ENCODE measurements at regions of chr1 and their contacts with region 1.

Region 1: DNA sequence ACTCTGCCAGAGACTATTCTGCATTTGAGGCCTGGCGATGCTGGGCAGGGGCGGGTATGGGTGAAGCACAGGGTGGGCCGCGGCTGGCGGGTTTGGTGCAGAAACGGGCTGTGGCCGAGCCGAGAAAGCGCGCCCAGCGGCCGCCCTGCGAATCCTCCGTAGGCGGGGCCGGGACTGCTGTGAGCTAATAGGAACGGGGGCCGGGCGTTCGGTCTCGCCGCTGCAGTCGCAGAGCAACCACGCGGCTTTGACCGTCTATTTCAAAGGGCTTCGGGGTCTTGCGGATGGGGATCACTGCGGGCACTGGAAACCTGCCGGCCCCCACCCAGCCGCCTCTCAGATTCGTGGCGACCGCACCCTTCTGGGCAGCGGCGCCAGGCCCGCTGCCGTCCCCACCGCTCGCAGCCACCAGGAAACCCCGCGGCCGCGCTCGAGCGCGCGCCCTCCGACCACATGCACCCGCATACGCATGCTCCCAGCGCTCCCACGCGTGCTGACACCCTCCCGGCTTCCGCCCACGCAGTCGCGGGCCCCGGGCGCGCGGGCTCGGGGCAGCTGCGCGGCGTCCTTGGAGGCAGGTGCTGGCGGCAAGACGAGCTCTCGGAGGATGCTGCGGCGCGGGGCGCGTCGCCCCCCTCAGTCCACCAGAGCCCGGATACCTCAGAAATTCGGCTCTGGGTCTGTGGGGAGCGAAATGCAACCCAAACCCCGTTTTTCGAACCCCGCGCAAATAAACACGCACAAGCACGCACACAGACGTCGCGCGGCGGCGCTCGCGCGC is 32.6 kb downstream of the DNTTIP2 start:
- DNase-seq: peak; percentile 87
- ATAC-seq: peak; percentile 26
- H3K4me3 Mint-ChIP-seq: peak overlapping the region; percentile 90
- H3K27ac Mint-ChIP-seq: peak overlapping the region; percentile 88
- H3K4me1 Mint-ChIP-seq: peaks cover 20% of the 10 kb centered on the region
- H3K27me3 Mint-ChIP-seq: no peaks in the 10 kb centered on the region

Region 2: GRCh38 chr1:93179886-93180722 is 666.3 kb before region 1 on chr1 and contains the start of gene TMED5:
- CTCF ChIA-PET with region 1: no interaction called
- POLR2A ChIA-PET with region 1: no interaction called
- intact Hi-C with region 1: loop called in 1 of 2 experiments (anchors 1 kb)
- DNase-seq: peak; percentile 98
- ATAC-seq: peak; percentile 85
- H3K4me3 Mint-ChIP-seq: peak within 1 kb of the TSS; percentile 89
- H3K27ac Mint-ChIP-seq: peak within 1 kb of the TSS; percentile 99
- H3K4me1 Mint-ChIP-seq: peaks cover 41% of the 10 kb centered on the region
- H3K27me3 Mint-ChIP-seq: no peaks in the 10 kb centered on the region
- total RNA-seq, gene TMED5: 32.6 to 33.0 TPM

Region 3: DNA sequence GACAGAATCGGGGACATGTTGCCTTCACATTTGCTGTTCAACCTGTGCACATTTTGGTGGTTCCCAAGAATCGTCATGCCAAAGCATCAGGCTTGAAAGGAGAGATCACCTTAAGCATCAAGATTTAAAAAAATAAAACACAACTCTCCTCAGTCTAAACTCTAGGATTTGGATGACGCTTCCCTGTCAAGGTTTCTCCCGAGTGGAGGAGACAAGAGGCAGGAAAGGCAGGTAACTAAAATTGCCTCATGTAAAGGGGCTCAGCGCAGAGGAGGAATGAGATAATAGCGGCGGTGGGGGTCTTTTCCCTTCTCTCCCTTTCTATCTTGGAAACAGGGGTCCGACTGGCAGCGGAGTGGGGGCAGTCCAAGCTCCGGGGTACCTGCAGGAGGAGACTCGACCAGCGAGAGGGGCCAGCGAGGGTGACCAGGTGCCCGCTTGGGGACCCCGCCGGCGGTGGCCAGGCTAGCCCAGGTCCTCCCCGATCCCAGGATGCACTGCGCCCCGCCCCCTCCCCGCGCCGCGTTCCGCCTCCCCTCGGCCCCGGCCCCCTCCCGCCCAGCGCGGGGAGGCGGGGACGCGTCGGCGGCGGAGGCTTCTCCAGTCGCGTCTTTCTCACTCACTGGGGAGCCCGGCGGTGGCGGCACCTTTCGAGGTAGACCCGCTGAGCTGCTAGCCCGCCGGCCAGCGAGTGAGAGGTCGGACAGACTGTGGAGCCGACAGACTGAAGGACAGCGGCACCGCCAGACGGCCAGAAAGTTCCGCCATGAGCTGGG is 398.7 kb before region 1 on chr1 and contains the start of gene FNBP1L:
- CTCF ChIA-PET with region 1: interaction called, 5 read pairs
- POLR2A ChIA-PET with region 1: no interaction called
- intact Hi-C with region 1: loop called (anchors 2 kb)
- DNase-seq: peak; percentile 81
- ATAC-seq: peak; percentile 87
- H3K4me3 Mint-ChIP-seq: peak within 1 kb of the TSS; percentile 83
- H3K27ac Mint-ChIP-seq: peak within 1 kb of the TSS; percentile 72
- H3K4me1 Mint-ChIP-seq: peaks cover 15% of the 10 kb centered on the region
- H3K27me3 Mint-ChIP-seq: peaks cover 24% of the 10 kb centered on the region
- total RNA-seq, gene FNBP1L: 1.2 to 1.4 TPM

Region 4: DNA sequence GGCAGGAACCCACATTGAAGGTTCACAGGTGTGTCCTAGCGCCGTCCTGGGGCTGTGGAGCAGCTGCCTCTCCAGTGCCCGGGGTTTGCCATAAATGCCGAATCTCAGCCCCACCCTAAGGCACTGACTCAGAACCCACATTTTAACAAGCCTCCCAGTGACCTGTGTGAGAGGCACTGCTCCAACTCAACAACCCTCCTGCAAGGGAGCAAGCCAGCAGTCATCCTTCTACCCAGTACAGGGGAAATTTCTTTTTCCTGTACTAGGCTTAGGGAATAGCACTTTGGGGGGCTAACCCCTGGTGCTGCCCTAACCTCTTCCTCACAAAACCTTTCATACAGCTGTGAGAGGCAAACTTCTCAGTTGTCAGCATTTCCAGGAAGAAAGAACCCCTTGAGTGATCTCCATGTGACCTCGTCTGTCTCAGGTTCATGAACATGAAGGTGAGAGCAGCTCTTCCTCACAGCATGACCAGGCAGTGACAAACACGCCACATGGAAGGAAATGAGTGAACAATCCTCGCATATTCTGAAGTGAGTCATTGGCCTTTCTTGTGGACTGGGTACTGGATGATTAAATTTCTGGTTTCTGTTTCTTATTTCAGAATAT is 153.3 kb before region 1 on chr1:
- CTCF ChIA-PET with region 1: interaction called, 5 read pairs
- POLR2A ChIA-PET with region 1: no interaction called
- intact Hi-C with region 1: loop called in 1 of 2 experiments (anchors 1 kb)
- DNase-seq: peak; percentile 76
- ATAC-seq: peak; percentile 95
- H3K4me3 Mint-ChIP-seq: no peak overlapping the region
- H3K27ac Mint-ChIP-seq: peak overlapping the region; percentile 55
- H3K4me1 Mint-ChIP-seq: peaks cover 17% of the 10 kb centered on the region
- H3K27me3 Mint-ChIP-seq: peaks cover 4% of the 10 kb centered on the region

Region 5: DNA sequence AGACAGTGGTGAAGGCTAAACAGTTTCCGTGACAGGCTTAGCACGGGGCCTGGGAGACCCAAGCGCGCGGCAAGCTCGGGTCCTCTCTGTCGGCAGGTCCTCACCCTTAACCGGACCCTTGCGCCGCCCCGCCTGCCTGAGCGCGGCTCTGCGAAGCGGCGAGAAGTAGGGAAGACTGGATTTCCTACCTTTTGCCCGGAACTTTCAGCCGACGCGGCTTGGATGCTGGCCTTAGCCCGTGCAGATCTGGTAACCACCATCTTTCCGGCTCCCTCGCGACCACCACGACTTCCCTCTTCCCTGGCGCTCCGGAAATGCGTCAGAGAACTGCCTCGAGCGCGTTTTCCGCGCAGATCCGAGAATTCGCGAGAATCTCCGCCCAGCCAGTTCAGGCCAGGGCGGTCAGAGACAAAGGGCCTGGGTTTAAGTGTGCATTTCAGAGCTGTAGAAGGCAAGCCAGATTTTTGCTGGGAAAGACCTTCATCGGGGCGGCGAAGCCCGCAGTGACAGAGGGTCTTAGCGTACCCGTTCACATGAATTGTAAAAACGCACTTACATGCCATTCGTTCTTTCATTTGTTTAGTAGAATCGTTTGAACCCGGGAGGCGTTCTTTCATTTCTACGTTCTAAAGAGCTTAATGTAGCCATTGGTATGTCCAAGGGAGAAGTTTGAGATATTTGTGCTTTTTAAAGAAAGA is 32.6 kb after region 1 on chr1 and contains the start of gene DNTTIP2:
- CTCF ChIA-PET with region 1: interaction called, 3 read pairs
- POLR2A ChIA-PET with region 1: no interaction called
- intact Hi-C with region 1: loop called (anchors 1 to 2 kb)
- DNase-seq: peak; percentile 94
- ATAC-seq: peak; percentile 93
- H3K4me3 Mint-ChIP-seq: peak within 1 kb of the TSS; percentile 92
- H3K27ac Mint-ChIP-seq: peak within 1 kb of the TSS; percentile 97
- H3K4me1 Mint-ChIP-seq: peaks cover 45% of the 10 kb centered on the region
- H3K27me3 Mint-ChIP-seq: no peaks in the 10 kb centered on the region
- total RNA-seq, gene DNTTIP2: 82.8 to 84.9 TPM

Region 6: DNA sequence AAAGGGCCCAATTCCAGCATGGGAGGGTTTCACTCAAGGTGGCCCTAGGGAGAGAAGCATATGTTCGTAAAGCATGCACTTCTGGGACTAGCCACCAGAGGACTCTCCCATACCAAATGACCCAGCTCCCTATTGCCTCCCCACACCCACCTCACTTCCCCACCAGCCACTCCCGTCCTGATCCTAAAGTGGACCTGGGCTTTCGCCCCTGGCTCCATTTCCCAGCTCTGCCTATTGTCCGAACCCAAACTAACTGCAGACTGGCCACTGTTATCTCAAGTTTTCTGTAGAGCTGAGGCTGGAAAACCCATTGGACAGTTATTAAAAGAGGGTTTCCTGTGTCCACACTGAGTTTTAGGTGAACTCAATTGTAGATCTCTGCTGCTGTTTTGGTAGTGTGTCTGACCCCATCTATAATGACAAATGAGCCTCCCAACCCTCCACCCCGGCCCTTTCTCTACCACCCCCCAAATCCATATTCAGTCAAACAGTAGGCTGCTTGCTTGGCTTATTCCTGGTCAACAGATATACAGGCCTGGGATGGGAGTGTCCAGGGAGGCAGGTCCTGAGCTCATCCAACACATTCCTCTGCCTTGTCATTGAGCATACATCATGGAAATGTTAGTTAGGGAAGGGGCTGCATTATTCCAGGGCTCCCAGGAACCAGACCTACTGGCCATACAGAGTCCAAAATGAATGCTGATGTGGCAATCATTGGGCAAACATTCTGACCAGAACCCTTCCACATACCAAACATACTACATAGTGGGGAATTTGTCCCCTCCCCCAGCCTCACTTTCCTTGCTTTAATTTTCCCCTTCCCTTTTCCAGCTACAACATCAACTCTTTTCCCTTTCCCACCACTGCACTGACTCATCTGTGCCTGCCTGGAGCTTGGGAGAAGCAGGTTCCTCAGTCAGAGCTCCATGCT is 215.4 kb after region 1 on chr1:
- CTCF ChIA-PET with region 1: no interaction called
- POLR2A ChIA-PET with region 1: no interaction called
- intact Hi-C with region 1: no loop called
- DNase-seq: peak; percentile 64
- ATAC-seq: no peak
- H3K4me3 Mint-ChIP-seq: no peak overlapping the region
- H3K27ac Mint-ChIP-seq: no peak overlapping the region
- H3K4me1 Mint-ChIP-seq: no peaks in the 10 kb centered on the region
- H3K27me3 Mint-ChIP-seq: peaks cover 9% of the 10 kb centered on the region

Region 7: DNA sequence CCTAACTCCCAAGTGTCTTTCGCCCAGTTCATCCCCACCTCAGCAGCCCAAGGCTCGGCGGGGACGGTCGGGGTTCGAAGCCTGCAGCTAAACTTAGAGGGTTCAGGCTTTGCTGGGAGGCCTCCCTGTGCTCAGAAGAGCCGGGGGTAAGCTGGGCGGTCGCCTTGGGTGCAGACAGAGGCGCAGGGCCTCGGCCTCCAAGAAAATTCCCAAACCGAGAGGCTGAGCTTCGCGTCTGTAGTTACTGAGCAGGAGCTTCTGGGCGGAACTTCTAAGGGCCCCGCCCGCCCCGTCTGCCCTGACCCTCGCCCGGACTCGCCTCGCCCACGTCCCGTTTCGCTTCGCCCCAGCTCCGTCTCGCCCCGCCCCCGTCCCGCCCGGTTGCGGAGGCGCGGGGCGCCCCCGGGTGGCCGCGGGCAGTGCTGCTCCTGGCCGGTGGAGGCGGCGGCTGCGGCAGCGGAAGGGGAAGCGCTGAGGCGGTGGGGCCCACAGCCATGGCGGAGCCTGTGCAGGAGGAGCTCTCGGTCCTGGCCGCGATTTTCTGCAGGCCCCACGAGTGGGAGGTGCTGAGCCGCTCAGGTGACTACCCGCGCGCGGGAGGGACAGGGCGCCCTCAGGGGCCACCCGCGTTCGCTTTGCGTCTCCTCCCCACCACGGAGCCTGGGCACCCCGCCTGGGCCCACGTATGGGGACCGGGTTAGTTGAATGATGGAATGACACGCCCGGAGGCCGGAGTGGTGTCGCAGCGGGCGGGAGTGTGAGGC is 1387.5 kb after region 1 on chr1 and contains the start of gene RWDD3:
- CTCF ChIA-PET with region 1: no interaction called
- POLR2A ChIA-PET with region 1: no interaction called
- intact Hi-C with region 1: loop called in 1 of 2 experiments (anchors 5 kb)
- DNase-seq: peak; percentile 96
- ATAC-seq: peak; percentile 96
- H3K4me3 Mint-ChIP-seq: peak within 1 kb of the TSS; percentile 86
- H3K27ac Mint-ChIP-seq: peak within 1 kb of the TSS; percentile 91
- H3K4me1 Mint-ChIP-seq: peaks cover 38% of the 10 kb centered on the region
- H3K27me3 Mint-ChIP-seq: peaks cover 6% of the 10 kb centered on the region
- total RNA-seq, gene RWDD3: 10.5 to 14.3 TPM

Measured in activated CD4-positive, alpha-beta T cell treated with anti-CD3 and anti-CD28 coated beads for 36 hours (primary cell).